ENCODE measurements at regions of chr22 and their contacts with region 1.

Region 1: GRCh38 chr22:44735540-44736488 is 16.6 kb upstream of the ARHGAP8 start:
- DNase-seq: peak; percentile 40 to 57 (median 49)
- H3K4me3 ChIP-seq: no peak overlapping the region
- H3K4me3 Mint-ChIP-seq: no peak overlapping the region
- H3K27ac ChIP-seq: no peak overlapping the region
- H3K27ac Mint-ChIP-seq: peak overlapping the region in 1 of 7 donors; percentile 72
- H3K4me1 ChIP-seq: no peaks in the 10 kb centered on the region
- H3K4me1 Mint-ChIP-seq: no peaks in the 10 kb centered on the region
- H3K27me3 ChIP-seq: no peaks in the 10 kb centered on the region
- H3K27me3 Mint-ChIP-seq: peaks cover 0 to 6% (median 0%) of the 10 kb centered on the region in 3 donors
- CTCF ChIP-seq: peak; percentile 100

Region 2: GRCh38 chr22:44697423-44698141 is 38.2 kb before region 1 on chr22:
- intact Hi-C with region 1: loop called (anchors 1 to 2 kb)
- DNase-seq: peak; percentile 70 to 77 (median 71)
- H3K4me3 ChIP-seq: no peak overlapping the region
- H3K4me3 Mint-ChIP-seq: no peak overlapping the region
- H3K27ac ChIP-seq: no peak overlapping the region
- H3K27ac Mint-ChIP-seq: peak overlapping the region in 3 of 7 donors; percentile 25 to 49 (median 38)
- H3K4me1 ChIP-seq: peaks cover 6 to 12% of the 10 kb centered on the region in 2 donors
- H3K4me1 Mint-ChIP-seq: peaks cover 5% of the 10 kb centered on the region
- H3K27me3 ChIP-seq: peaks cover 2 to 12% of the 10 kb centered on the region in 2 donors
- H3K27me3 Mint-ChIP-seq: peaks cover 15 to 32% (median 22%) of the 10 kb centered on the region in 3 donors
- CTCF ChIP-seq: peak; percentile 95